GM10248 (cell line): ENCODE measurements at regions of chr19 and their contacts with region 1.

Region 1: GRCh38 chr19:47157431-47158321 is 27.0 kb downstream of the SAE1 start:
- DNase-seq: no peak
- CTCF ChIP-seq: no peak

Region 2: DNA sequence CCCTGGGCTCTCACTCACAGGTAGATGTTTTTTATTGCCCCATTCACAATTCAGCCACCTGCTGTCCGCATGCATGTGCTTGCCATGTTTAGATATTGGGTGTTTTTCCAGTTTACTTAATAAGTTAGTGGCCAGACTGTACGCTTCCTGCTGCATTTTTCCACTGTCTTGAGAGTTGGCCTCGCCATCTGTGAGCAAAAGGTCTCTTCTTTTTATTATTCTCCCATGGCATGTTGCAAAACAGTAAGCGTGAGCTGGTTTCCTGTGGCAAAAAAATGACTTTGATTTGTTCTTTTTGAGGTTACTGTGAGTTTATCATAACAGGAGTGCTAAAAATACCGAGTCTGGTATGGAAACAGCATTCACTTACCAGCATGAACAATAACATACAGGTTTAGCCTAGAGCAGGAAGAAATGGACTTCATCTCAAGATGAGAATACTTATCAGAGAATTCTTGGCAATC is 19.0 kb after region 1 on chr19:
- CTCF ChIA-PET with region 1: interaction called, 19 read pairs
- POLR2A ChIA-PET with region 1: no interaction called
- DNase-seq: no peak
- CTCF ChIP-seq: no peak

Region 3: DNA sequence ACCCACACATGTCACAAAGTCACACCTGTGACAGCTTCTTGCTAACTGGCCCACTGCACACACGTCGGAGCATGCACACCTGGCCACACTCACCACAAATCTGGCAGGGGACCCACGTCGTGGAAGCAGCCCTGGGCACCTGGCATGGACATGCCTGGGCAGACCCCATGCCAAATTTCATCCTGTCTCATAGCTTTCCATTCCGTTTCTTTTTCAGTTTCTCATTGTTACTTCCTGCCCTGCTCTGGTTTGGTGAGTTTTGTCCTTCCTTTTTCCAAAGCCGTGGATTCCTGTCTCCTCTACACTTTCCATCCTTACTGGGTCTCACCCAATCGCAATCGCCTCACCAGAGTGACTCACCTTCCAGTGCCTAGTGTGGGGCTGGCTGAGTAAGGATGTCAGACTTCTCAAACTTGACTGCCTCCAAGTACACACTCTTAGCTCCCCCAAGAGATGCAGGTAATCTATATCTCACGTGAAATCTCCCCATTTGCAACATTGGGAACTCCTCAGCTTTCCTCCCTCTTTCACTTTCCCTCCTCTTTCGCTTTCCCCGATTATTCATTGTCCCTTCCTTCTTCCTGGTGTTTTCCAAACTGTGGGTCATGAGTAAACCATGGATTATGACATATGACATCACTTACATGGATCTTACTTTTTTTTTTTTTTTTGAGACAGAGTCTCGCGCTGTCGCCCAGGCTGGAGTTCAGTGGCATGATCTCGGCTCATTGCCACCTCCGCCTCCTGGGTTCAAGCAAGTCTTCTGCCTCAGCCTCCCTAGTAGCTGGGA is 74.9 kb after region 1 on chr19:
- CTCF ChIA-PET with region 1: no interaction called
- POLR2A ChIA-PET with region 1: no interaction called
- DNase-seq: peak; percentile 21
- CTCF ChIP-seq: no peak